K562 (cell line): ENCODE measurements at regions of chr11 and their contacts with region 1.

Region 1: GRCh38 chr11:85854557-85855340 is 434 bp upstream of the CCDC83 start:
- DNase-seq: peak; percentile 90 to 94 (median 92)
- ATAC-seq: peak; percentile 99
- H3K4me3 ChIP-seq: peak overlapping the region; percentile 33
- H3K27ac ChIP-seq: peak overlapping the region; percentile 56
- H3K4me1 ChIP-seq: peaks cover 4 to 11% of the 10 kb centered on the region in 2 experiments; a peak in 2 of 5 replicates
- H3K27me3 ChIP-seq: no peaks in the 10 kb centered on the region
- CTCF ChIP-seq: peak; percentile 85 to 93 (median 88)
- EP300 ChIP-seq: no peak
- POLR2A ChIP-seq: peak; percentile 76
- RAD21 ChIP-seq: peak; percentile 91 to 97

Region 2: GRCh38 chr11:85787809-85788805 is 66.6 kb before region 1 on chr11:
- CTCF ChIA-PET with region 1: no interaction called
- POLR2A ChIA-PET with region 1: no interaction called
- in situ Hi-C with region 1: no loop called
- intact Hi-C with region 1: no loop called
- DNase-seq: no peak
- ATAC-seq: no peak
- H3K4me3 ChIP-seq: no peak overlapping the region
- H3K27ac ChIP-seq: no peak overlapping the region
- H3K4me1 ChIP-seq: no peaks in the 10 kb centered on the region
- H3K27me3 ChIP-seq: no peaks in the 10 kb centered on the region
- CTCF ChIP-seq: no peak
- EP300 ChIP-seq: no peak
- POLR2A ChIP-seq: no peak
- RAD21 ChIP-seq: no peak

Region 3: DNA sequence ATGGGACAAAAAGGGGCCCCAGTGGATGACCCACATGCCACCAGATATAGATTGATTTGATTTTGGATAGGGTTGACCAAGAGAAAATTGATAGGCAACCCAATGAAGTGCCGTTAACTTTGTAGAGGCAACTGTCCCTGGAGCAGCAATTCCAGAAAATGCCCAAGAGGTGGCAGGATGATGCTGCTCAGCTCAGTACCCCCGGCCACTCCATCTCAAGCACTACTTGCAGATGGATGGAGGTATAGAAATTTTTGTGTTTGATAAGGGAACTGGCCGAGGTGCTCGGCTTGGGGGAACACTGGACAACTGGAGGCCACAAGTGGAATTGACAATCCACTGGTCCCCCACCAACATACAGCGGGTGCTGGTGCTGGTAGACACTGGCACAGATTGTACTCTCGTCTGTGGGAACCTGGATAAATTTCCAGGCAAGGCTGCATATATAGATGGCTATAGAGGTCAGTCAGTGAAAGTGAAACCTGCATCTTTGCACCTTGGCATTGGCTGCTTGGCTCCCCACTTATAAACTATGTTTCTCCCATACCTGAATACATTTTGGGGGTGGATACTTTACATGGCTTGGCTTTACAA is 86.7 kb after region 1 on chr11:
- CTCF ChIA-PET with region 1: no interaction called
- POLR2A ChIA-PET with region 1: no interaction called
- in situ Hi-C with region 1: no loop called
- intact Hi-C with region 1: loop called (anchors 2 kb)
- DNase-seq: peak; percentile 38 to 69 (median 52)
- ATAC-seq: peak; percentile 92
- H3K4me3 ChIP-seq: no peak overlapping the region
- H3K27ac ChIP-seq: no peak overlapping the region
- H3K4me1 ChIP-seq: no peaks in the 10 kb centered on the region; a peak in 1 of 5 replicates
- H3K27me3 ChIP-seq: no peaks in the 10 kb centered on the region
- CTCF ChIP-seq: peak; percentile 73 to 86 (median 82)
- EP300 ChIP-seq: no peak
- POLR2A ChIP-seq: no peak
- RAD21 ChIP-seq: peak; percentile 72 to 89

Region 4: GRCh38 chr11:86291466-86292262 is 436.9 kb after region 1 on chr11:
- CTCF ChIA-PET with region 1: interaction called, 13 read pairs
- POLR2A ChIA-PET with region 1: no interaction called
- in situ Hi-C with region 1: no loop called
- intact Hi-C with region 1: loop called (anchors 1 kb)
- DNase-seq: peak; percentile 57 to 76 (median 64)
- ATAC-seq: peak; percentile 80
- H3K4me3 ChIP-seq: no peak overlapping the region
- H3K27ac ChIP-seq: no peak overlapping the region
- H3K4me1 ChIP-seq: no peaks in the 10 kb centered on the region; a peak in 1 of 5 replicates
- H3K27me3 ChIP-seq: no peaks in the 10 kb centered on the region
- CTCF ChIP-seq: peak; percentile 70 to 88 (median 84)
- EP300 ChIP-seq: no peak
- POLR2A ChIP-seq: no peak
- RAD21 ChIP-seq: peak; percentile 78 to 83

Region 5: GRCh38 chr11:86418917-86419316 is 564.2 kb after region 1 on chr11:
- CTCF ChIA-PET with region 1: interaction called, 4 read pairs
- POLR2A ChIA-PET with region 1: no interaction called
- in situ Hi-C with region 1: no loop called
- intact Hi-C with region 1: loop called (anchors 5 kb)
- DNase-seq: peak in 1 of 4 experiments; percentile 38
- ATAC-seq: peak; percentile 84
- H3K4me3 ChIP-seq: no peak overlapping the region
- H3K27ac ChIP-seq: no peak overlapping the region
- H3K4me1 ChIP-seq: peaks cover 0 to 10% of the 10 kb centered on the region in 2 experiments; a peak in 3 of 5 replicates
- H3K27me3 ChIP-seq: peaks cover 0 to 8% of the 10 kb centered on the region in 2 experiments; a peak in 1 of 5 replicates
- CTCF ChIP-seq: peak in 2 of 3 experiments; percentile 53 to 61; a peak in 4 of 6 replicates
- EP300 ChIP-seq: no peak
- POLR2A ChIP-seq: no peak
- RAD21 ChIP-seq: peak; percentile 51 to 66

Region 6: DNA sequence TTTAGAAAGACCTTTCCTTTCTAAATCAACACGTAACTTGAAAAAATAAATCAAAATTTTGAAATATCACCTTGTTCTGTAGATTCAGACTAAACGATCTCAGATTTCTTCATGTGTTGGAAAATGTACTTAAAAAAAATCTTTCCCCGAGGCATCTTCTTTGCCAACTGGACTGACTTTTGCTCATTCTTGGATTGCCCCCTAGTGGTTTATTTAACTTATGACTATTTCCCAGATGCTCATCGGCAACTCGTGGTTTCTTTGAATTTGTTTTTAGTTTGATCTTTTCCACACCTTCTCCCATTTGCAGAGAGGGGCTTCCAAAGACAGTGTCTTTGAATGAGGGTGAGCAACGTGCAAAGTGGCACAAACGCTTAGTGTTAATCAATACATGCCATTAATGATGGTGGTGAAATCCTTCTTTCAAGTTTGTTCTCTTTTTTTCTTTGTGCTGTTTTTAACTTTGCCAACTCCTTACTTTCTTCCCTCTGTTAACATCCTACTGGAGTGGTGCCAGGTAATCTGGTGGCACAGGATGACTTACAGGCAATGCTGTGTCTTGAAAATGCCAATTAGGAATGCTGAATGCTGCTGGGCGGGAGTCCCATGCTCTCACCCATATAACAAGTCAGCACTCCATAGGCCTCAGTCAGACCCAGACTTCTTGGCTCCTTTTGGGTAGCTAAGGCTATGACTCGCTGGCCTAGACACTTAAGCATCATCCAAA is 963.9 kb after region 1 on chr11:
- CTCF ChIA-PET with region 1: no interaction called
- POLR2A ChIA-PET with region 1: no interaction called
- in situ Hi-C with region 1: no loop called
- intact Hi-C with region 1: loop called (anchors 5 kb)
- DNase-seq: peak; percentile 49 to 64 (median 55)
- ATAC-seq: peak; percentile 77
- H3K4me3 ChIP-seq: no peak overlapping the region
- H3K27ac ChIP-seq: no peak overlapping the region
- H3K4me1 ChIP-seq: no peaks in the 10 kb centered on the region
- H3K27me3 ChIP-seq: peaks cover 0 to 14% of the 10 kb centered on the region in 2 experiments; a peak in 2 of 5 replicates
- CTCF ChIP-seq: peak; percentile 61 to 88 (median 67)
- EP300 ChIP-seq: no peak
- POLR2A ChIP-seq: no peak
- RAD21 ChIP-seq: peak; percentile 93 to 95